ENCODE measurements at regions of chr17 and their contacts with region 1.

Region 1: DNA sequence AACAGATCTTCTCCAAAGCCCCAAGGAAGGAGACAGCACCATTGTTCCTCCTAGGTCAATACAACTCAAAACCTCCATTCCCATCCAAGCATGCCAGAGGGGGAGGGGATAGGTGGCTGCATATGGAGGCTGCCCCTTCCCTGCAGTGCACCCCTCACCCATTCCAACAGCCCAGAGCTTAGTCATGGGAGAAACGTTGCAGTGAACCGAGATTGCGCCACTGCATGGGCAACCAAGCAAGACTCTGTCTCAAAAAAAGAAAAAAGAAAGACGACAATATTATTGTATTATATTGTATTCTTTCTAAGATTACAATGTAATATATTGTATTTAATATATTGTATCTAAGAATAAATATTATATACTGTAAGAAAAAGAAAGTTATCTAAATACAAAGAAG is 36.4 kb upstream of the CD300E start:
- DNase-seq: no peak
- H3K4me3 Mint-ChIP-seq: no peak overlapping the region
- H3K27ac Mint-ChIP-seq: no peak overlapping the region
- H3K4me1 Mint-ChIP-seq: peaks cover 8% of the 10 kb centered on the region
- H3K27me3 Mint-ChIP-seq: peaks cover 64% of the 10 kb centered on the region

Region 2: GRCh38 chr17:74478420-74479100 is 181.3 kb before region 1 on chr17:
- CTCF ChIA-PET with region 1: no interaction called
- POLR2A ChIA-PET with region 1: no interaction called
- DNase-seq: peak; percentile 34
- H3K4me3 Mint-ChIP-seq: no peak overlapping the region
- H3K27ac Mint-ChIP-seq: peak overlapping the region; percentile 67
- H3K4me1 Mint-ChIP-seq: peaks cover 55% of the 10 kb centered on the region
- H3K27me3 Mint-ChIP-seq: no peaks in the 10 kb centered on the region

Region 3: DNA sequence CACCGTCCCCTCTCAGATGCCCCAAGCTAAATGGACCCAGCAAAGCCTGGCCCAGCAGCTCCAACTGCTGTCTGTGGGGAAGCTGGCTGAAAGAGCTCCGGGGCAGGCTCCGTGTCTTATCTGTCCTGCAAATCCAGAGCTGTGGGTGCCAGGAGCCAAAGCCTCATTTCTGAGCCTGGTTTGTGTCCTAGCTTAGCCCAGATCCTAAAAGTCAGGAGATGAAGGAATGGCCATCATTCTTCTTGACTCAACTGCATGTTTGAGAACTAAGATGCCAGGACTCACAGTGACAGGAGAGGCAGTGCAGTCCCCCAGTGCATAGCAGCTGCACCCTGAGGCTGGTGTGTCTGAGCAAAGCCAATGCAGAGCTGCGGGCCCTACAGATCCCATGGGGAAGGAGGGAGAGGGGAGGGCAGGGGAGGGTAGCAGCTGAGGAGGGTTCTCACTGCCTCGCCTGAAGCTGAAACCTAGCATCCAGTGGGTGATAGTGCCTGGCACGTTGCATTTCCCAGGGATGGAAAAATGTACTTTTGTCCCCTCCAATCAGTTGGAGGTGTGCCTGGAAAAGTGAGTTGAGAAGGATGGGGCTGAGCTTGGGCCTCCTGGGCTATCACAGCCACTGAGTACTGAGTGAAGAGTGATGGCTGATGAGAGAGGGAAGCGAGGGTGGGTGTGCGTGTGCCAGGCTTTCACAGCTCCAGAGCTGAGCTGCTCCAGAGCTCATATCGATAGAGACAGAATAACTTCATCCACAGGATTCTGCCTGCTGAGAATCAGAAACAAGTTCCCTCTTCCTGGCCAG is 11.8 kb before region 1 on chr17:
- CTCF ChIA-PET with region 1: interaction called, 11 read pairs
- POLR2A ChIA-PET with region 1: no interaction called
- DNase-seq: no peak
- H3K4me3 Mint-ChIP-seq: no peak overlapping the region
- H3K27ac Mint-ChIP-seq: no peak overlapping the region
- H3K4me1 Mint-ChIP-seq: no peaks in the 10 kb centered on the region
- H3K27me3 Mint-ChIP-seq: peaks cover 82% of the 10 kb centered on the region

Region 4: DNA sequence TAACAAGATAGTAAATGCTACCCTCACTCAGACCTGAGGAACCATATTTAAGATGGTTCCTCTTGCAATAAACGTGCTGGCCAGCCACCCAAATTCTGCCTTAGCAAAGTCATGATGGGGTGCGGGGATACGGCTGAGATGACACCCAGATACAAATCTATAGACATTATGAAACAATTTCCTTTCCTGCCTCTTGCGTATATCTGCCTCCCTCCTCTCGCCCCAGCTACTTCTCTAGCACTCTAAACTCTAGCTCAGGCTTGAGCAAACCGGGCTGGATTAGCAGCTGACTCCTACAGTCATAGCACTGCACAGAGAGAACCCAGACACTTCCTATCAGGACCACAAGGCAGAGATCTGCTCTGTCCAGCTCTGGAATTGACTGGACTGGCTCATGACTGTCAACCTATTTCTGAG is 30.5 kb after region 1 on chr17:
- CTCF ChIA-PET with region 1: interaction called, 15 read pairs
- POLR2A ChIA-PET with region 1: no interaction called
- DNase-seq: no peak
- H3K4me3 Mint-ChIP-seq: no peak overlapping the region
- H3K27ac Mint-ChIP-seq: no peak overlapping the region
- H3K4me1 Mint-ChIP-seq: peaks cover 26% of the 10 kb centered on the region
- H3K27me3 Mint-ChIP-seq: peaks cover 36% of the 10 kb centered on the region

Region 5: GRCh38 chr17:74742153-74742515 is 82.2 kb after region 1 on chr17:
- CTCF ChIA-PET with region 1: interaction called, 255 read pairs
- POLR2A ChIA-PET with region 1: interaction called, 33 read pairs
- DNase-seq: peak; percentile 84
- H3K4me3 Mint-ChIP-seq: peak overlapping the region; percentile 69
- H3K27ac Mint-ChIP-seq: peak overlapping the region; percentile 91
- H3K4me1 Mint-ChIP-seq: peaks cover 91% of the 10 kb centered on the region
- H3K27me3 Mint-ChIP-seq: no peaks in the 10 kb centered on the region

Region 6: DNA sequence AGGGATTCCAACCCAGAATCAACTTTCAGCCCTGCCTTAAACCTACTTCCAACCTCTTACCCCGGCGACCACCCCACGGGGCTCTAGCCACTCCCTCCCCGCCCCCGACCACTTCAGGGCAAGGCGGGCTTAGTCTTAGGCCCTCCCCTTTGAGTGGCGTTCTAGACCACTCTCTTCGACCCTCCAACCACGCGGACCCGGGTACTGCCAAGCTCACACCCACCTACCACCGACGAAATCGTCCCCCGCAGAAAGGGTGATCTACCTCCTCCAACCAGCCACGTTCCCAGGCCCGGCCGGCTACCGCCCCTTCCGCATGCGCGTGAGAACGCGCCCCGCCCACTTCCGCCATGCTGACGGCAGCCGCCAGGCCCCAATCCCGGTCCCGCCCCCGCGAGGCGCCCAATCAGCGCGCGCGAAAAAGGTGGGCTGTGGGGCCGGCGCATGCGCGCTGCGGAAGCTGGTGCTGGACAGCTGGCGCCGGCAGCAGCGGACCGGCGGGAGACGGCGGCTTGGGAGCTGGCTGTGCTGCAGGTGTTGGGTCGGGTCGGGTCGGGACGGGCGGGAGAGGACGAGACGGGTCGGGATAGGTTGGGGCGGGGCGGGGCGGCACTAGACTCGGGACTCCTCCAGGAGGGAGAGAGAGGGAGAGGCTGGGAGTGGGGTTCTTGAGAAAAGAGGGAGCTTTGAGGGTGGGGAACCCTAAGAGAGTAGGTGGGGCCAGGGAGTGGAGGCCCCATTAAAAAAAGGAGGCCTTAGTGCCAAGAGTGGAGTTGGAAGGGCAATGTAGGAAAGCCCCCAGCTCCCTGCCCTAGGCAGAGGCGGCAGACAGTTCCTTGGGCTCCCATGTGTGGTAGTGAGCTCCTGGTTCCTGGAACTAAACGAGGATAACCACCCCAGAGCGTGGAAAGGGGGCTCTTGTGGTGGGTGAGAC is 116.4 kb after region 1 on chr17 and contains the start of gene NAT9:
- CTCF ChIA-PET with region 1: interaction called, 78 read pairs
- POLR2A ChIA-PET with region 1: interaction called, 8 read pairs
- DNase-seq: peak; percentile 99
- H3K4me3 Mint-ChIP-seq: peak within 1 kb of the TSS; percentile 99
- H3K27ac Mint-ChIP-seq: peak within 1 kb of the TSS; percentile 85
- H3K4me1 Mint-ChIP-seq: peaks cover 68% of the 10 kb centered on the region
- H3K27me3 Mint-ChIP-seq: no peaks in the 10 kb centered on the region
- total RNA-seq, gene NAT9: 32.1 to 32.3 TPM

Region 7: GRCh38 chr17:74798239-74798707 is 138.4 kb after region 1 on chr17:
- CTCF ChIA-PET with region 1: no interaction called
- POLR2A ChIA-PET with region 1: no interaction called
- DNase-seq: no peak
- H3K4me3 Mint-ChIP-seq: no peak overlapping the region
- H3K27ac Mint-ChIP-seq: no peak overlapping the region
- H3K4me1 Mint-ChIP-seq: peaks cover 2% of the 10 kb centered on the region
- H3K27me3 Mint-ChIP-seq: no peaks in the 10 kb centered on the region

Region 8: DNA sequence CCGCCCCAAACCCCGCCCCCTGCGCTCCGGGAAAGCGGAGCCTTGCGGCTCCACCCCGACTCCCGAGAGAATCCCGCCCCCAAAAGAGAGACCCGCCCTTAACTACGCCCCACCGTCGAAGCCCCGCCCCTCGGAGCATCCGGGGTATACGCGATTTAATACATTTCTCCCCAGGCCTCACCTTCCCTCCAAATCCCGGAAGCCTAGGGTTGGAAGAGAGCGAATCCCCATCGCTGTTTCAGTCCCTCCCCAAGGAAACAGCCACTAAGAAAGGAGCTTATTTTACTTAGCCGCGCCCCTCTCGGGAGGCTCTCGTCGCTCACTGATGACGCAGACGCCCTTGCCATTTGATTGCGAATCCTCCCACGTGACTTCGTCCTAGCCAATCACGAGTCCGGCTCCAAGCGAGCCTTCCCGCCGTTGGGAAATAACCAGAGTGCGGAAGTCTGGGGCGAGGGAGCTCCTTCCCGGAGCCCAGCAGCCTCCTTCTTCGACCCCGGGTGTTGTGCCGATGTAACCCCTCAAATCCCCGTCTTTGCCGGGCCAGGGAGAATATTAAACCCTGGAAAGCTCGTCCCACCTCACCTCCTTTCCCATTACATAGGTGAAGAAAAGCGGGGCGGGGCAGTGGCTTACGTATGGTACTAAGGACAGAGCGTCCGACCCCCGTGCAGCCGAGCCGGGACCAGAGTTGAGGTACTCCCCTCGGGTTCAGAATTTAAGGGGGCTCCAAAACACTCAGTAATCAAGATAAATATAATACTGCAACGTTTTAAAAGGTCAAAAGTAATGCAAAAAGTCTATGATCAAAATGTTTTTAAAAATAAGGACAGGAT is 213.4 kb after region 1 on chr17:
- CTCF ChIA-PET with region 1: interaction called, 10 read pairs
- POLR2A ChIA-PET with region 1: interaction called, 4 read pairs
- DNase-seq: peak; percentile 100
- H3K4me3 Mint-ChIP-seq: peak overlapping the region; percentile 96
- H3K27ac Mint-ChIP-seq: peak overlapping the region; percentile 86
- H3K4me1 Mint-ChIP-seq: peaks cover 40% of the 10 kb centered on the region
- H3K27me3 Mint-ChIP-seq: no peaks in the 10 kb centered on the region

Measured in activated CD4-positive, alpha-beta memory T cell treated with anti-CD3 and anti-CD28 coated beads, Interleukin-2, amount 10 ng/mL, durations not matched to agents 7 days and 5 days (primary cell).